Activated B cell treated with CpG ODN at 0.5 μM for 24 hours (primary cell): ENCODE measurements at regions of chr18 and their contacts with region 1.

Region 1: GRCh38 chr18:48992699-48993555 is 42.2 kb upstream of the SMAD7 start:
- DNase-seq: peak; percentile 45
- ATAC-seq: peak; percentile 98
- H3K4me3 Mint-ChIP-seq: peak overlapping the region; percentile 42
- H3K27ac Mint-ChIP-seq: peak overlapping the region; percentile 70
- H3K4me1 Mint-ChIP-seq: peaks cover 20% of the 10 kb centered on the region
- H3K27me3 Mint-ChIP-seq: no peaks in the 10 kb centered on the region
- CTCF ChIP-seq: no peak

Region 2: DNA sequence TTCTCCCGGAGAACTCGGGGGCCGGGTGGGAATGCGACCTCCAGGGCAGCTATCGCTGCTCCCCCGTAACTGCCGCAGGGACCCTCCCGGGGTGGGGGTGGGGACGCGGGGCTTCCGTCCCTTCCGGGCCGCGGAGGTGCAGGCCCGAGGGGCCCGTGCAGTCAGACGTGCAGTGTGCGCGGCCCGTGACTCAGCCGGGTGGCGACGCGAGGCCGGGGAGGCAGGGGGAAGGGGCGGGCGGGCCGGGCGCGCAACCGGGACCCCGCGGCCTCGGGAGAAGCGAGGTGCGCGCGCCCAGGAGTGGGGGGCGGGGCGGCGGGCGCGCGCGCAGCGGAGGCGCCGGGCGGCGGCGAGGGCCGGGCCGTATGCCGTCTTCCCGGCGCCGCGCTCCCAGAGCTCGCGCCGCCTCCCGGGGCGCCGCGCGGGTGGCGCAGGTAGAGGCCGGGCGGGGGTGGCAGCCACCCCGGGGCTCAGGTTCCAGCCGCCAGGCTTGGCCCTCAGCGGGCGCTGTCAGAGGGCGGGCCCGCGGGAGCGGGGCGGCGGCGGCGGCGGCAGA is 17.2 kb before region 1 on chr18:
- CTCF ChIA-PET with region 1: no interaction called
- POLR2A ChIA-PET with region 1: no interaction called
- intact Hi-C with region 1: loop called (anchors 2 kb)
- DNase-seq: peak; percentile 44
- ATAC-seq: peak; percentile 78
- H3K4me3 Mint-ChIP-seq: peak overlapping the region; percentile 38
- H3K27ac Mint-ChIP-seq: no peak overlapping the region
- H3K4me1 Mint-ChIP-seq: peaks cover 14% of the 10 kb centered on the region
- H3K27me3 Mint-ChIP-seq: peaks cover 16% of the 10 kb centered on the region
- CTCF ChIP-seq: no peak

Region 3: DNA sequence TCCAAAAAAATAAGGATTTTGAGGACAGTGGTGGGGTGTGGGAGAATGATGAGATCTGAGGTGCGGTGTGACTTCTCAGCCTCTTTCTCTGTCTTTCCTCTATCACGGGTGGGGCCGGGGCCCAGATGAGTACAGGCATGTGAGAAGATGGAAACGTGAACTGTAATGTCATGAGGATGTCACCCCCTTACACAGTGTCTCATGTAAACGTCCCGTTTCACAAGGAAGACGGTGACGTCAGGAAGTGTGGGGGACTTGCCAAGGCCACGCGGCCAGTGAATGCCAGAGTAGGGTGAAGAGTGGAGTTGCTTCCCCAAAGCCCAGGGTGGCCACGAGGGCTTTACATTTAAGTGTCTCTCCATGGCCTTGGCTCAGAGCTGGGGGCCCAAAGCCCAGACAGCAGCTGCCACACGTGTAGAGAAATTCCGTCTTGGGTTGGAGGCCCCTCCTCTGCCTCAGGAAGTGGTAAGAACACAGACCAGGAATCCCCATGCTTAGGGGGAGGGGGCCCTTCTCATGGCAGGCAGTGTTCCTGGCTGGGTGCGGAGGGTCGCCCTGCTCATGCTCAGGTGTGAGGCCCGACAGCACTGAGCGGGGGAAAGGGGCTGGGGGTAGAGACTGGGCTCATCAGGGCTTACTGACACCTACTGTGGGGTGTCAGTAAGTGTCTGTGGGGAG is 38.7 kb after region 1 on chr18:
- CTCF ChIA-PET with region 1: no interaction called
- POLR2A ChIA-PET with region 1: no interaction called
- intact Hi-C with region 1: loop called (anchors 5 kb)
- DNase-seq: no peak
- ATAC-seq: peak; percentile 56
- H3K4me3 Mint-ChIP-seq: no peak overlapping the region
- H3K27ac Mint-ChIP-seq: no peak overlapping the region
- H3K4me1 Mint-ChIP-seq: peaks cover 13% of the 10 kb centered on the region
- H3K27me3 Mint-ChIP-seq: no peaks in the 10 kb centered on the region
- CTCF ChIP-seq: no peak